Vagina (tissue), 2 donors: ENCODE measurements at regions of chr4 and their contacts with region 1.

Region 1: GRCh38 chr4:6716018-6716911 is at the start of gene BLOC1S4:
- DNase-seq: no peak
- H3K4me3 ChIP-seq: peak within 1 kb of the TSS; percentile 88 to 98
- H3K27ac ChIP-seq: peak within 1 kb of the TSS; percentile 87
- H3K4me1 ChIP-seq: peaks cover 28% of the 10 kb centered on the region
- H3K27me3 ChIP-seq: no peaks in the 10 kb centered on the region
- CTCF ChIP-seq: peak in 1 of 3 experiments; percentile 8
- POLR2A ChIP-seq: peak in 1 of 2 donors; percentile 66
- total RNA-seq, gene BLOC1S4: 34.9 TPM

Region 2: DNA sequence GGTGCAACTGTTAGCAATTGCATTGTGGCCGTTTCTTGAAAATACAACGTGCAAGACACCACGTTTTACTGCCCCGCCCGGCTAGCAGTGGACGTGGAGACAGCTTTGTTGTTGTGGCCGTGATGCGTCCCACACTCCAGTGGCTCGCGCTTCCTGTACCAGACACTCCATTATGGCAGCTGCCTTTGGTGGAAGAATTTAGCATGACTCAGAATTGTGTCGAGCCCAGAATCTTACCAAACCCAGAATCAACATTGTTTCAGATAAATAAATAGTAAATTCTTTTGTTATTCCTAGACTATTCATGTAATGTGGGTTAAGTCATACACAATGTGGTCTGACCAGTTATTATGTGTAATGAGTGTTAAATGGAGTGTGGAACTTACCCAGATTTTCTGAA is 47.9 kb before region 1 on chr4:
- intact Hi-C with region 1: no loop called
- DNase-seq: no peak
- H3K4me3 ChIP-seq: no peak overlapping the region
- H3K27ac ChIP-seq: no peak overlapping the region
- H3K4me1 ChIP-seq: peaks cover 23% of the 10 kb centered on the region
- H3K27me3 ChIP-seq: no peaks in the 10 kb centered on the region
- CTCF ChIP-seq: no peak
- POLR2A ChIP-seq: no peak

Region 3: GRCh38 chr4:6783053-6783981 is 67.1 kb after region 1 on chr4:
- intact Hi-C with region 1: loop called (anchors 1 kb)
- DNase-seq: peak in 1 of 2 donors; percentile 94
- H3K4me3 ChIP-seq: peak overlapping the region; percentile 96 to 100
- H3K27ac ChIP-seq: peak overlapping the region; percentile 100
- H3K4me1 ChIP-seq: peaks cover 52% of the 10 kb centered on the region
- H3K27me3 ChIP-seq: no peaks in the 10 kb centered on the region
- CTCF ChIP-seq: no peak
- POLR2A ChIP-seq: peak in 1 of 2 donors; percentile 76

Region 4: DNA sequence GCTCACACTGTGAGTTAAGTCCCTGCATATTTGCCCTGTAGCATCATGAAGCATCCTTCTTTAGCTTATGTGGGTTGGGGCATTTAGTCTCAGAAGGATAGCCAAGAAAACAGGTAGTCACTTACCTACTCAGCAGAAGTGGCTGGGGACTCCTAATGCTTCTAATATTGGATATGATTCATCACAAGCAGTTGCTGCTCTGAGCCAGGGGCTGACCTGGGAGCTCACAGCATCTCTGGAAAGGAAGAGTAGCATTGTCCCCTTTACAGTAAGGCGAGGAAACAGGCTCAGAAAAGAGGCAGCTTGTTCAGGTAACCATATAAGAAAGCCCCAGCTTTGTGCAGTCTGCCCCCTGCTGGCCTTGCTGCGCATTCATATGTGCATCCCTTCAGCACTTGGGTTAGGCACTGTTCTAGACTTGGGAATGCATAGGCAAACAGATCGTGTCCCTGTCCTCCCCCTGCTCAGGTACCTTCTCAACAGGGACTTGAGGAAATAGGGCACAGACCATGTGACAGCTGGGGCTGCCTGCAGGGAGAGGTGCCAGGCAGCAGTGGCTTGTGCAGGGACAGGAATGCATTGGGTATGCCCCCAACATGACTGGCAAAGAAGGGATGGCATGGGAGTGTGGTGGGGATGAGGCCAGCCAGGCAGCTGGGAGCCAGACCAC is 157.7 kb after region 1 on chr4:
- intact Hi-C with region 1: loop called (anchors 2 kb)
- DNase-seq: no peak
- H3K4me3 ChIP-seq: no peak overlapping the region
- H3K27ac ChIP-seq: no peak overlapping the region
- H3K4me1 ChIP-seq: peaks cover 10% of the 10 kb centered on the region
- H3K27me3 ChIP-seq: no peaks in the 10 kb centered on the region
- CTCF ChIP-seq: peak; percentile 62 to 78 (median 68)
- POLR2A ChIP-seq: no peak

Region 5: GRCh38 chr4:7067452-7068278 is 351.4 kb after region 1 on chr4 and contains the start of gene GRPEL1:
- intact Hi-C with region 1: loop called (anchors 10 kb)
- DNase-seq: peak; percentile 99 to 100
- H3K4me3 ChIP-seq: peak within 1 kb of the TSS; percentile 85 to 97
- H3K27ac ChIP-seq: peak within 1 kb of the TSS; percentile 86
- H3K4me1 ChIP-seq: peaks cover 39% of the 10 kb centered on the region
- H3K27me3 ChIP-seq: no peaks in the 10 kb centered on the region
- CTCF ChIP-seq: no peak
- POLR2A ChIP-seq: peak; percentile 1 to 95
- total RNA-seq, gene GRPEL1: 11.0 TPM